ENCODE measurements at regions of chr2 and their contacts with region 1.

Region 1: DNA sequence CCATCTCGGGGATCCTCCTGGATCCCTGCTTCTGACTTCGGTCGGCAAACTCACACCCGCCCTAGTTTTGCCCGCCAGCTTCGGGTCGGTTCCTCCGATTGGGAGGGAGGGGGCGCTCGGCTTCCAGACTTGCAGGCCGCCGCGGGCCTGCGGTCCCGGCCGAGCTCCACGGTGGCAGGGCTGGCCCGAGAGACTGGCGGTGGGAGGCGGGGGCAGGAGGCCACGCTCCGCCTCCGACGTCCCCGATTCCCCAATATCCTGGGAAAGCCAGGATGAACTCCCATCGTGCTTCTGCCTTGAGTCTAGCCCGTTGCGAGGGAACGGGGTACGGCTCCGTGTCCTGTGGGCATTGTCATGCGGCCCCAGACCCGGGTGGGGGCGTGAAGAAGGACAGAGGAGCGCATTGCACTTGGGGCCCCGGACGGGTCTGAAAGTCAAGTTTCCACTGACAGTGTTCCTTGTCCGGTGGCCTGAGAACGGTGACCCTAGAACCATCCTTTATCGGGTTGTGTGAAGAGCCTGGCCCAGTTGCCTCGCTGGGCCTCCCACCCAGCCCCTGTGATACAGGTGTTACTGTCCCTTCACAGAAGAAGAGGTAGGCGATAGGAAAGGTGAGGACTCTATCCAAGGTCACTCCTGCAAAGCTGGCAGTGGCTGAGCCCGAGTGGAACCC is 2.4 kb upstream of the INHBB start:
- DNase-seq: peak; percentile 71 to 94 (median 86)
- ATAC-seq: peak; percentile 83 to 92 (median 90)
- H3K4me3 ChIP-seq: peak overlapping the region in 2 of 4 donors; percentile 1 to 61
- H3K27ac ChIP-seq: no peak overlapping the region
- H3K4me1 ChIP-seq: peaks cover 13 to 14% (median 13%) of the 10 kb centered on the region in 3 donors
- H3K27me3 ChIP-seq: peaks cover 0 to 6% (median 0%) of the 10 kb centered on the region in 4 donors
- CTCF ChIP-seq: peak; percentile 43 to 78 (median 74)

Region 2: DNA sequence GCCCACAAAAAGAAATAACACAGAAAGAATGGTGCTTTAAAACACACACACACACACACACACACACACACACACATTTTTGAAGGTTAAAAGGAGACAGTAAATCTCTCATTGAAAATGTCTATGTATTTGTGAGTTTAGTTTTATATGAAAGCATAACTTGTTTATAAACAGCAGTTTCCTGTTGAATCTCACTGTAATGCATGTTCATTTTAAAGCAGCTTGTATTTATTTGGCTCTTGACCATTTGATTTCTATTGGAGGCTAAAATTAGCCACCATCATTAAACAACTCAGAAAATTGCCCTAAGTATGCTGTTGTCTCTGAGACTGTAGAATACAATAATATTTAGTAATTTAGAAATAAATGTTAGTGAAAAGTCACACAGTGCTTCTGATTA is 215.4 kb before region 1 on chr2:
- intact Hi-C with region 1: no loop called
- DNase-seq: no peak
- ATAC-seq: no peak
- H3K4me3 ChIP-seq: no peak overlapping the region
- H3K27ac ChIP-seq: no peak overlapping the region
- H3K4me1 ChIP-seq: no peaks in the 10 kb centered on the region
- H3K27me3 ChIP-seq: no peaks in the 10 kb centered on the region
- CTCF ChIP-seq: no peak

Region 3: GRCh38 chr2:120174963-120175581 is 168.5 kb before region 1 on chr2:
- intact Hi-C with region 1: no loop called
- DNase-seq: peak in 1 of 6 donors; percentile 31
- ATAC-seq: peak; percentile 56 to 84 (median 78)
- H3K4me3 ChIP-seq: no peak overlapping the region
- H3K27ac ChIP-seq: no peak overlapping the region
- H3K4me1 ChIP-seq: no peaks in the 10 kb centered on the region
- H3K27me3 ChIP-seq: no peaks in the 10 kb centered on the region
- CTCF ChIP-seq: peak; percentile 37 to 72 (median 40)

Region 4: GRCh38 chr2:120223034-120223912 is 120.3 kb before region 1 on chr2 and contains the start of gene TMEM185B:
- intact Hi-C with region 1: no loop called
- DNase-seq: peak; percentile 89 to 98 (median 95)
- ATAC-seq: peak; percentile 97 to 99 (median 98)
- H3K4me3 ChIP-seq: peak within 1 kb of the TSS; percentile 47 to 63 (median 58)
- H3K27ac ChIP-seq: peak within 1 kb of the TSS; percentile 81 to 94 (median 90)
- H3K4me1 ChIP-seq: peaks cover 2 to 25% (median 6%) of the 10 kb centered on the region in 3 donors
- H3K27me3 ChIP-seq: no peaks in the 10 kb centered on the region
- CTCF ChIP-seq: peak in 2 of 4 donors; percentile 15 to 27
- total RNA-seq, gene TMEM185B: 6.6 to 13.5 (median 11.0) TPM

Region 5: DNA sequence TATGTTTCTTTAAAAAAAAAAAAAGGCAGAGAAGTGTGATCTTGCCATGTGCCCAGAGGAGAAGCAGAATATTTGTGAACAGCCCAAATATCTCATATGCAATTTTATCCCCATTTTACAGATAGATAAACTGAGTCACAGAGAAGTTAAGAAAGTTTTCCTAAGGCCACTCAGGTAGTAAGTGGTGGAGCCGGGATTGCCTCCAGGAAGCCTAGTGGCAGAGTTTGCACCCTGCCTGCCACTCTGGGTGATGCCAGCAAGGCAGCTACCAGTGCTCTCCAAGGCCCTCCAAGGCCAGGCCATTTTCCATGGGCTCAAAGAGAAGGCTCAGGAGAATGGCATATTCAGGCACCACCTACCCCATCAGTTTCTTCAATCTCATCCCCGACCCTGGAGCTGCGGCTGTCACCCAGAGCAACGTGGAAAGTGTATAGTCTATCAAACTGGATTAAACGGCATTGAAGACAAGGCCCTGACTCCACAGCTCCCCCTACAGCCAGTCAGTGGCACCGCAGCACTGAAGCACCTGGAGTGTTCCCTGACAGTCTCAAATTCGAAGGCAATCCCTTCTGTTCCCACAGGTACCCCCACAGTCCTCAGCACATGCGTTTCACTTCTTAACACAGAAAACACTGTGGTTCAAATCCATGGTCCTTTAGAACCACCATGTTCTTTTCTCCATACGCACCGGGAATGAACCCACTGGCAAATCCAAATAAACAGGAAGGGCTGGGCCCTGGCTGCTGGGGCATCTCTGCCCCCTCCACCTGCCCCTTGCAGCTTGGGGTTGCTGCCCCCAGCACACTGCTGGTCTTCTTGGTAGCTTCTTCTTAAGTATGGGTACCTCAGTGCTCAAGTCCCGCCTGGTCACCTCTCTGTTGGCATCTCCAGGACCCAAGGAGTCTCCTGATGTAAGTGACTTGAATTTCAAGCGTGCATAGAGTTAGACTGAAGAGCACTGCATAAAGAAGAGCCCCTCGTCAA is 177.7 kb after region 1 on chr2:
- intact Hi-C with region 1: loop called in 1 of 3 experiments (anchors 10 kb)
- DNase-seq: peak in 5 of 6 donors; percentile 37 to 84 (median 75)
- ATAC-seq: peak; percentile 80 to 95 (median 86)
- H3K4me3 ChIP-seq: no peak overlapping the region
- H3K27ac ChIP-seq: no peak overlapping the region
- H3K4me1 ChIP-seq: no peaks in the 10 kb centered on the region
- H3K27me3 ChIP-seq: peaks cover 0 to 6% (median 0%) of the 10 kb centered on the region in 4 donors
- CTCF ChIP-seq: peak; percentile 85 to 92 (median 90)

Region 6: DNA sequence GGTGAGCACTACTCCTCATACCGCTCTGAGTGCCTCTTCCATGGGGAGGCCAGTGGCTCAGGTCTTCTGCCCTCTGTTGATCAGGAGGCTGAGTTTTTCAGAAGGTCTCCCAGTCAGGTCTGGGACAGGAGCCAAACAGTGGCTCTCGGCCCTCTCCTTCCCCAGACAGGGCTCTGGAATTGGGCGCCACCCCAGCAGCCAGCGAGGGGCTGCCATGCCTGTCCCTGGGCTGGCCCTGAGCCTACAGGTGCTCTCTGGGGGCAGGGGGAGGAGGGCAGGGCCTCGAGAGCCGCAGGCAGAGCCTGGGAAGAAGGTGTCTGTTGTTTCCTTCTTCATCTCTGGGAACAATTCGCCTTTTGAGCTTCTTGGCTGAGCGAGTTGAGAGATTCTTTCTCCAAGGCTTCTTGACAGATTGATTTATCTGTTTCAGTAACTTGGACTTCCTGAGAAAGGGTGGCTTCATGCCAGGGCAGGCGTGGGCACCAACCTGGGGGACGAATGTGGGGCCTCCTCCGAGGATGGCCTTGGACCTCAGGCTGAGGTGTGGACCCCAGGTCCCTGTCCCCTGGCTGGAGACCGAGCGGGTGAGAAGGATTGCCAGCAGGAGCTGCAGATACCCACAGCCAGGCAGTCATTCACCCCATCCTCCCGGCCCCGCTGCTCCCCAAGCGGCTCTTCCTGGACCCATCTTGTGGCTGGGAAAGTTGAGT is 327.4 kb after region 1 on chr2:
- intact Hi-C with region 1: loop called in 1 of 3 experiments (anchors 5 kb)
- DNase-seq: no peak
- ATAC-seq: peak in 2 of 4 donors; percentile 6 to 26
- H3K4me3 ChIP-seq: no peak overlapping the region
- H3K27ac ChIP-seq: peak overlapping the region in 1 of 4 donors; percentile 33
- H3K4me1 ChIP-seq: no peaks in the 10 kb centered on the region
- H3K27me3 ChIP-seq: no peaks in the 10 kb centered on the region
- CTCF ChIP-seq: no peak

Region 7: GRCh38 chr2:120680136-120680761 is 336.7 kb after region 1 on chr2:
- intact Hi-C with region 1: loop called in 1 of 3 experiments (anchors 5 kb)
- DNase-seq: peak; percentile 70 to 88 (median 84)
- ATAC-seq: peak; percentile 80 to 90 (median 88)
- H3K4me3 ChIP-seq: no peak overlapping the region
- H3K27ac ChIP-seq: no peak overlapping the region
- H3K4me1 ChIP-seq: no peaks in the 10 kb centered on the region
- H3K27me3 ChIP-seq: no peaks in the 10 kb centered on the region
- CTCF ChIP-seq: peak; percentile 19 to 46 (median 30)